CD8-positive, alpha-beta T cell (primary cell): ENCODE measurements at regions of chr14 and their contacts with region 1.

Region 1: DNA sequence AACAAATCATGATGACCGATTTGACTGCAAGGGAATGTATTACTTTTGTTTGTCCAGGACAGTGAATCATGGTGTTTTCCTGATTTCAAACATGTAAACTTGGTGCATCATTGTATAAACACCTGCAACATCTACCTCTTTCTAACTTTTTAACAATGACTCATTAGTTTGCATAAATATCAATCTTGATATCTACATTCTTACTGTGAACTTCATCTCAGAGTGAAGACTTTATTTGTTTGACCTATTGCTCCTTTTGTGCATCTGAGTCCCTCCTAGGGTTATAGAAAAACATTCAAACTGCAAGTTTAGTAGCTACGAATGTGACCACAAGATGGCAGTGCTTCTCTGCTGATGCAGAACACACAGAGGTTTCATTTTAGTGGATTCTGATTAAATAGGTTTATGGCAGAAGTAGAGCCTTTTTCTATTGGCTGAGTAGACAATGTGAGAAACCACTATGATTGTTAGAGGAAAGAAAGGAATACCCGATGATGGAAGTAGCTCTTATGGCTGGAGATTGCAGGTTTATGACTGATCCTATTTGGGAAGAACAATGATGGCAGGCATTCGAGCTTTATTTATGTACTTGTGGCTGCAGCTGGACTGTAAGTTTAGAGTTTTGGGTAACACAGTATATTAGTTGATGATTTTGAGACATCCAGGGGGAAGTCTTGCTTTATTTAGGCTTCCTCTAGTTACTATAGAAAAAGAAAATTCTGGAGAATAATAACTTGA is 244.2 kb upstream of the OR4E1 start:
- DNase-seq: peak in 8 of 9 experiments; percentile 38 to 83 (median 65)
- ATAC-seq: peak; percentile 55
- H3K4me3 ChIP-seq: peak overlapping the region; percentile 14 to 16
- H3K4me3 Mint-ChIP-seq: peak overlapping the region; percentile 83
- H3K27ac ChIP-seq: no peak overlapping the region
- H3K27ac Mint-ChIP-seq: peak overlapping the region; percentile 91
- H3K4me1 ChIP-seq: peaks cover 36% of the 10 kb centered on the region
- H3K4me1 Mint-ChIP-seq: peaks cover 51% of the 10 kb centered on the region
- H3K27me3 ChIP-seq: no peaks in the 10 kb centered on the region
- H3K27me3 Mint-ChIP-seq: no peaks in the 10 kb centered on the region
- CTCF ChIP-seq: peak; percentile 79

Region 2: DNA sequence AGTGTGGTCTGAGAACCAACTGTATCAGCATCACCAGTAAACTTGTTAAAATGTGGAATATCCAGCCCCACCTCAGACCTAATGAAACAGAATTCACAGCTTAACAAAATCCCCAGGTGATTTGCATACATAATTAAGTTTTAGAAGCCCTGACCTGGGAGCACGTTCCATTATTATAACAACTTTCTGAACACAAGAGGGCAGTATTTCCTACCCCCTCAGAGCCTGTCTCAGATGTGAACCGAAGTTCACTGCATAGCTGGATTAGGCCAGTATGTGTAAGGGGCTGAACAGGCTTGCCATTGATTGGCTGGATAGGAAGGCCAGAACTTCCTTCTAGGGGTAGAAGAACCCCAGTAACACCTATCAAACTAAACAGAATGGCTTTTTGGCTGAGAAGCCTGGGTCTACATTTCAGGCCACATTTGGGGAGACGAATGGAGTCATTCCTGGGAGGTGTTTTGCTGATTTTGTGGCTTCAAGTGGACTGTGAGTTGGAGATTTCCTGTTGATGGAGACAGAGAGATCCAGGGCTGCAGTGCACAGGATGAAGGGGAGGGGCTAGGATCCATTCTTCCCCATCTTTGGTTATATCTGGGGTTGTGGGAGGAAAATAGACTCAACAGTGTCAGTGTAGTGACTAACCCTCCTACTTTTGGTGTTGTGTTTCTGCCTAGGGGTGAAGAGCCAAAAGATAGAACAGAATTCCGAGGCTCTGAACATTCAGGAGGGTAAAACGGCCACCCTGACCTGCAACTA is 149.6 kb before region 1 on chr14:
- CTCF ChIA-PET with region 1: no interaction called
- POLR2A ChIA-PET with region 1: no interaction called
- intact Hi-C with region 1: no loop called
- DNase-seq: peak in 4 of 9 experiments; percentile 10 to 73 (median 40)
- ATAC-seq: peak; percentile 79
- H3K4me3 ChIP-seq: peak overlapping the region in 1 of 2 experiments; percentile 18
- H3K4me3 Mint-ChIP-seq: peak overlapping the region; percentile 70
- H3K27ac ChIP-seq: peak overlapping the region; percentile 7 to 10
- H3K27ac Mint-ChIP-seq: peak overlapping the region; percentile 85
- H3K4me1 ChIP-seq: no peaks in the 10 kb centered on the region
- H3K4me1 Mint-ChIP-seq: peaks cover 2% of the 10 kb centered on the region
- H3K27me3 ChIP-seq: no peaks in the 10 kb centered on the region
- H3K27me3 Mint-ChIP-seq: peaks cover 12% of the 10 kb centered on the region
- CTCF ChIP-seq: peak; percentile 58

Region 3: GRCh38 chr14:21874167-21874566 is 43.7 kb before region 1 on chr14:
- CTCF ChIA-PET with region 1: interaction called, 22 read pairs
- POLR2A ChIA-PET with region 1: interaction called, 3 read pairs
- intact Hi-C with region 1: loop called in 1 of 2 experiments (anchors 5 kb)
- DNase-seq: peak in 2 of 9 experiments; percentile 42 to 57
- ATAC-seq: peak; percentile 56
- H3K4me3 ChIP-seq: peak overlapping the region; percentile 8 to 24
- H3K4me3 Mint-ChIP-seq: peak overlapping the region; percentile 70
- H3K27ac ChIP-seq: peak overlapping the region; percentile 15 to 61
- H3K27ac Mint-ChIP-seq: peak overlapping the region; percentile 86
- H3K4me1 ChIP-seq: peaks cover 32% of the 10 kb centered on the region
- H3K4me1 Mint-ChIP-seq: peaks cover 45% of the 10 kb centered on the region
- H3K27me3 ChIP-seq: no peaks in the 10 kb centered on the region
- H3K27me3 Mint-ChIP-seq: no peaks in the 10 kb centered on the region
- CTCF ChIP-seq: no peak

Region 4: DNA sequence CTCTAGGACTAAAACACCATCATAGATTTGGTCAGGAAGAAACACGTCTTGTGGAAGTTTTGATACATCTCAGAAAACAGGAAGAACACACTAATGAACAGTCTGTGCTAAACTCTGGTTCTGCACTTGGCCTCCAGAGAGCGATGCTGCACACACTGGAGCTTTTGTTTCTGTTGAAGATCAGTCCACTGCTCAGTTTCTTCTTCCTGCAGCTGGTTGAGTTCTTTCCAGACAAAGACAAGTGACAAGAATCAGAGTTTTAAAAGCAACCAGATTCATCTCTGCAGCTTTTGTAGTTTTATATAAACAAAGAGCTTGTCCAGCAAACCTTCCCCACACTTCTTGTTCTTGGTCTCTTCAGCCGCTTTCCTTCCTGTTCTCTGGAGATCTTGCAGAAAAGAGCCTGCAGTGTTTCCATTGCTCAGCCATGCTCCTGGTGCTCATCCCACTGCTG is 15.2 kb before region 1 on chr14:
- CTCF ChIA-PET with region 1: interaction called, 29 read pairs
- POLR2A ChIA-PET with region 1: interaction called, 3 read pairs
- intact Hi-C with region 1: no loop called
- DNase-seq: peak in 7 of 9 experiments; percentile 3 to 69 (median 48)
- ATAC-seq: peak; percentile 95
- H3K4me3 ChIP-seq: no peak overlapping the region
- H3K4me3 Mint-ChIP-seq: peak overlapping the region; percentile 49
- H3K27ac ChIP-seq: no peak overlapping the region
- H3K27ac Mint-ChIP-seq: peak overlapping the region; percentile 83
- H3K4me1 ChIP-seq: peaks cover 4% of the 10 kb centered on the region
- H3K4me1 Mint-ChIP-seq: peaks cover 13% of the 10 kb centered on the region
- H3K27me3 ChIP-seq: no peaks in the 10 kb centered on the region
- H3K27me3 Mint-ChIP-seq: no peaks in the 10 kb centered on the region
- CTCF ChIP-seq: peak; percentile 59

Region 5: DNA sequence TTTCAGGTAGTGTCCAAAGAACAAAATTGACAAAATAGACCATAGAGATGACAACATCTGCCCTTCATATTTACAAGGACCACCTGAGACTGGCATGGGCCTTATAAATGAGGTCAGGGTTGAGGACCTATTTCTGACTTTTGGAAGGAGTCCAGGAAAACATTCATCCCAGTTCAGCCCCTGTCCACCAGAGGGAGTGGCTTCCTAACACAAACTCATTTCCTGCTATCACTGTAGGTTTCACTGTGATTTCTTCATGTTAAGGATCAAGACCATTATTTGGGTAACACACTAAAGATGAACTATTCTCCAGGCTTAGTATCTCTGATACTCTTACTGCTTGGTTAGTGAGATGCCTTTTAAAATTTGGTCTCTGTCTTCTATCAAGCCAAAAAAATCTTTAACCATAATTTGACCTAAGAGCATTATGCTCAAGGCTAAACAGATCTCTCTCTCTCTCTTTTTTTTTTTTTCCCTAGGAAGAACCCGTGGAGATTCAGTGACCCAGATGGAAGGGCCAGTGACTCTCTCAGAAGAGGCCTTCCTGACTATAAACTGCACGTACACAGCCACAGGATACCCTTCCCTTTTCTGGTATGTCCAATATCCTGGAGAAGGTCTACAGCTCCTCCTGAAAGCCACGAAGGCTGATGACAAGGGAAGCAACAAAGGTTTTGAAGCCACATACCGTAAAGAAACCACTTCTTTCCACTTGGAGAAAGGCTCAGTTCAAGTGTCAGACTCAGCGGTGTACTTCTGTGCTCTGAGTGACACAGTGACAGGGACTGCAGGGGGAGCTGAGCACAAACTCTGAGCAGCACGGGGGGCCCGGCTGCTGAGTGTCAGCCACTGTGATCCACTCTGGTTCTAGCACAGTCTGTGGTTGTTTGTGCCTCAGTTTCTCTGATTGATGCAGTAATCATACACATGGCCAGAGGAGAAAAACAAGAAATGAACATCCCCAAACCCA is 23.3 kb after region 1 on chr14:
- CTCF ChIA-PET with region 1: interaction called, 10 read pairs
- POLR2A ChIA-PET with region 1: interaction called, 3 read pairs
- intact Hi-C with region 1: no loop called
- DNase-seq: peak in 7 of 9 experiments; percentile 15 to 70 (median 43)
- ATAC-seq: peak; percentile 78
- H3K4me3 ChIP-seq: peak overlapping the region; percentile 7 to 26
- H3K4me3 Mint-ChIP-seq: peak overlapping the region; percentile 77
- H3K27ac ChIP-seq: no peak overlapping the region
- H3K27ac Mint-ChIP-seq: peak overlapping the region; percentile 84
- H3K4me1 ChIP-seq: peaks cover 18% of the 10 kb centered on the region
- H3K4me1 Mint-ChIP-seq: peaks cover 22% of the 10 kb centered on the region
- H3K27me3 ChIP-seq: no peaks in the 10 kb centered on the region
- H3K27me3 Mint-ChIP-seq: no peaks in the 10 kb centered on the region
- CTCF ChIP-seq: peak; percentile 45

Region 6: DNA sequence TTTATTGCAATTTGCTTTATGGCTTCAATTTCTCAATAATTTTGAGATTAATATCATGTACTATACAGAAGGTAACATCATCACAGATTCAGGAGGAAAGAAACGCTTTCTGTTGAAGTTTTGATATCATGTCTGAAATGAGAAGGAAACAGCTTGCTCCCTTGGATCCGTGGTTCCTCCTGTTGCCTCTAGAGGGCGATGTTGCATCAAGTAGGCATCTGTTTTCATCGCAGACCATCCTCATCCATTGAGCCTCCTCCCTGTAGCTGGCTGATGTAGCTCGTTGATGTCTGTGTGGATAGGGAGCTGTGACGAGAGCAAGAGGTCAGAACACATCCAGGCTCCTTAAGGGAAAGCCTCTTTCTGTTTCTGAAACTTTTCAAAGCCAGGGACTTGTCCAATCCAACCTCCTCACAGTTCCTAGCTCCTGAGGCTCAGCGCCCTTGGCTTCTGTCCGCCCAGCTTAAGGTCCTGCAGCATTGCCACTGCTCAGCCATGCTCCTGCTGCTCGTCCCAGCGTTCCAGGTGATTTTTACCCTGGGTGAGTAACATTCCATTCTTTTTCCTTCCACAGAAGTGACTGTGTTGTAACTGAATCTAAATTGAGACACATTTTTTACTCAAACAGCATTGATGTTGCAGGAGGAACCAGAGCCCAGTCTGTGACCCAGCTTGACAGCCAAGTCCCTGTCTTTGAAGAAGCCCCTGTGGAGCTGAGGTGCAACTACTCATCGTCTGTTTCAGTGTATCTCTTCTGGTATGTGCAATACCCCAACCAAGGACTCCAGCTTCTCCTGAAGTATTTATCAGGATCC is 60.5 kb after region 1 on chr14:
- CTCF ChIA-PET with region 1: interaction called, 15 read pairs
- POLR2A ChIA-PET with region 1: interaction called, 9 read pairs
- intact Hi-C with region 1: loop called (anchors 5 kb)
- DNase-seq: peak in 8 of 9 experiments; percentile 26 to 78 (median 58)
- ATAC-seq: peak; percentile 79
- H3K4me3 ChIP-seq: peak overlapping the region in 1 of 2 experiments; percentile 15
- H3K4me3 Mint-ChIP-seq: peak overlapping the region; percentile 71
- H3K27ac ChIP-seq: no peak overlapping the region
- H3K27ac Mint-ChIP-seq: peak overlapping the region; percentile 72
- H3K4me1 ChIP-seq: peaks cover 3% of the 10 kb centered on the region
- H3K4me1 Mint-ChIP-seq: peaks cover 17% of the 10 kb centered on the region
- H3K27me3 ChIP-seq: no peaks in the 10 kb centered on the region
- H3K27me3 Mint-ChIP-seq: no peaks in the 10 kb centered on the region
- CTCF ChIP-seq: peak; percentile 74

Region 7: DNA sequence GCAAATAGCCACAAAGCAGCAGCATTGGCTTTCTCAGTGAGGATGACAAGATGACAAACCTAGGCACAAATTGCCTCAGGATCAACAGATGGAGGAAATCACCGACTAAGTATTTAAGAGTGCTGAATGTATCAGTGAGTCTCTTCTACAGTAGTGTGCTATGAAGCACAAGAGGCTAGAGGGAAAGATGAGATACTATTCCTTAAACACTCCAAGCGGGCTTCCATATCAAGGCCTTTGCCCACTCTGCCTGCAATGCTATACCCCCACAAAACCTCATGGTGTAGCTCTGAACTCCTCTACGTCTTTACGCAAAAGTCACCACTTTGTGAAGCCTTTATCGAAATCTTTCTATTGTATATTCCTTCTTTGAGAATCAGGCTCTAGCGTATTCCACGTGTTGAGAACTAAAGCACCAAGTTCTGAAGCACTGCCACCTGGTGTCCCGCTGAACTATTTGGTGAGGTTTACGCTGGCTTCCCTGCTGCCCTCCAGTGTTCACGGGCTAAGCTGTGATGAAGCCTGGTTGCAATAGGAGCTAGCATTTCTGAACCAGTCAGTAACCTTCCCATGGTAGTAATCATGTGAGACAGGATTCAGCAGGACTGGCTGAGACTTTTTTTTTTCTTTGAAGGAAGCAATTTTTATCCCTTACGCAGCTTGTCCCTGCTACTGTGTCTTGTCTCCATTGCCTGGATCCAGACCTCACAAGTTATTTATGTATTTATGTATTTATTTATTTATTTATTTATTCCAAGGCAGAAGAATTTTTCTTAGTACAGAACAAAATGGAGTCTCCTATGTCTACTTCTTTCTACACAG is 182.3 kb after region 1 on chr14:
- CTCF ChIA-PET with region 1: interaction called, 4 read pairs
- POLR2A ChIA-PET with region 1: no interaction called
- intact Hi-C with region 1: loop called in 1 of 2 experiments (anchors 10 kb)
- DNase-seq: peak; percentile 21 to 81 (median 54)
- ATAC-seq: peak; percentile 70
- H3K4me3 ChIP-seq: no peak overlapping the region
- H3K4me3 Mint-ChIP-seq: no peak overlapping the region
- H3K27ac ChIP-seq: no peak overlapping the region
- H3K27ac Mint-ChIP-seq: no peak overlapping the region
- H3K4me1 ChIP-seq: peaks cover 34% of the 10 kb centered on the region
- H3K4me1 Mint-ChIP-seq: peaks cover 56% of the 10 kb centered on the region
- H3K27me3 ChIP-seq: no peaks in the 10 kb centered on the region
- H3K27me3 Mint-ChIP-seq: no peaks in the 10 kb centered on the region
- CTCF ChIP-seq: peak; percentile 48